ENCODE measurements at regions of chr4 and their contacts with region 1.

Region 1: GRCh38 chr4:184983672-184984356 is 34.5 kb upstream of the HELT start:
- DNase-seq: peak; percentile 89

Region 2: DNA sequence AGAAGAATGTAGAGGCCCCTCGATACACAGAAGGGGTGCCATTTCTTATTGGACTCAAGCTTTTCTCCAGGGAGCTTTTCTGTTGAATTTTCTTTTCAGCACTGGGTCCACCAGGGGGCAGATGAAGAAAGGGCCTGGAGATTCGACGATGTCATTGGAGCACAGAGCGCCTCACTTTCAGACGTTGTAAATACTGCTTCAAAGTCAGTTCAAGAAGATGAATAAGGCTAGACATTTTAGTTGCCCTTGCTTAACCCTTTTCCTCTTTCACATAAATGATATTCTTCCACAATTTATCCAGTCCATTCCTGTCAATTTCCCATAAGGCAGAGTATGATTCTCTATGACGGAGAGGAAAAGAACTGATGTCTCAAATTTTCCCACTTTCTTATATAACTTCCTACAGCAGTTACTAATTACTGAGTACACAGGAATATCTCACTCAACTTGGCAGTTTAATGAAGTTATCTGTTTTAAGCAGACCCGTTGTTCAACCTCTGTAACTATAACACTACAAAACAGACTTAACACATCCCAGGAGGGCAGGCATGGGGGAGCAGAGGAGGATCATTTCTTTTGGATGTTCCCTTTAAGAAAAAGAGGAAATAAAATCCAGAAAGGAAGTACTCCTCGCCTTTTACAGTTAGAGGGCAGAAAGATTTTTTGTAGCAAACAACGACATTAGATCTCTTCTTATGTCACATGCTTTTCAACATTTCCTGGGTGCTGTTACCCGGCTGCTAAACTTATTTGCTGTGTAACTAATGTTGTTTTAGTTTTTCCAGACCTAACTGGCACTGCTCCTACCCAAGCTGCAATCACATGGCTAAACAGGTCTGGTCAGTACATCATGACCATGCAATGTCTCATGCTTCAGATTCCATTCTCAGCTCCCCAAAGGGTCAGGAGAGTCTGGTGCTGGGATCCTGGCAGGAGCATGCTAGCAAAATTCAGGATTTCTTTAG is 237.7 kb before region 1 on chr4:
- intact Hi-C with region 1: loop called in 1 of 2 experiments (anchors 10 kb)
- DNase-seq: no peak

Region 3: DNA sequence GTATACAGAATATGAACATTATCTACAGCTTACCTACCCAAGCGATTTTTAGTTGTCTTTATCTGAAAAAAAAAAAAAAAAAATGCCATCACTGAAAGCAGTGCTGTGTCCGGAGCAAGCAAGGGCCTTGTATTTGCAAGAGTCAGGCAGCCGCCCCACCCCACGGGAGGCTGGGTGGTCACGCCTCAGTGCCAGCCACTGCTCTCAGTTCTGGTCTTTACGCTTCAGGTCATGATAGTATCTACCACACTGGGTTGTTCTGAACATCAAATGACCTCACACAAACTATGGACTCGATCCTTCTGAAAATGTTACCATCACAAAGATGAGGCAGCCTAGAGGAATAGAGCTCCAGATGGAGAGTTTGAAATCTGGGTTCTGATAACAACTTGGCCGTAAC is 28.2 kb before region 1 on chr4:
- intact Hi-C with region 1: no loop called
- DNase-seq: peak; percentile 35

Region 4: GRCh38 chr4:185405296-185405999 is 421.6 kb after region 1 on chr4:
- intact Hi-C with region 1: no loop called
- DNase-seq: no peak